Caco-2 (cell line): ENCODE measurements at regions of chr4 and their contacts with region 1.

Region 1: GRCh38 chr4:76896731-76897535 is 1.0 kb downstream of the SOWAHB start:
- DNase-seq: peak in 1 of 2 experiments; percentile 66
- H3K4me3 ChIP-seq: peak overlapping the region; percentile 92
- H3K4me3 Mint-ChIP-seq: peak overlapping the region; percentile 72
- H3K27ac Mint-ChIP-seq: no peak overlapping the region
- H3K4me1 ChIP-seq: peaks cover 23% of the 10 kb centered on the region
- H3K4me1 Mint-ChIP-seq: peaks cover 14% of the 10 kb centered on the region
- H3K27me3 ChIP-seq: no peaks in the 10 kb centered on the region
- H3K27me3 Mint-ChIP-seq: no peaks in the 10 kb centered on the region
- CTCF ChIP-seq: no peak

Region 2: DNA sequence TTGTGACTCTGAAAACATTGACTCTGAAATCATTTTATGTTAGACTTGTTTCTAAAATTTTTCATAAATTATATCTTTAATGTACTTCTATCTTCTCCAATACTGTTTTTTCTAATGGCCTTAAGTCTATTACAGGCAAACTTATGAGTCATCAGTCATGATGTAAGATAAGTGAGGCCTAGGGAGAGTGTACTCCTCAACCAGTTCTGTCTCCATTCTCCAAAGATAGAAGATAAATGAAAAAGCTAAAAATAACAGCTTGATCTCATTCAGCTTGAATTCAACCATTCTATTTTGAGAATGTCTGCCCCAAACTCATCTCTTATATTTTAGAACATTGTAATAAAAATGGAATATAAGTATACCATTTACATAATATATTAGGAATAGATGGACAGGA is 555.9 kb before region 1 on chr4:
- CTCF ChIA-PET with region 1: no interaction called
- POLR2A ChIA-PET with region 1: no interaction called
- intact Hi-C with region 1: no loop called
- DNase-seq: no peak
- H3K4me3 ChIP-seq: no peak overlapping the region
- H3K4me3 Mint-ChIP-seq: no peak overlapping the region
- H3K27ac Mint-ChIP-seq: no peak overlapping the region
- H3K4me1 ChIP-seq: 0 out of 2 replicates have a peak, but pooled peaks cover 10% of the 10 kb centered on the region
- H3K4me1 Mint-ChIP-seq: no peaks in the 10 kb centered on the region
- H3K27me3 ChIP-seq: no peaks in the 10 kb centered on the region
- H3K27me3 Mint-ChIP-seq: no peaks in the 10 kb centered on the region
- CTCF ChIP-seq: no peak

Region 3: DNA sequence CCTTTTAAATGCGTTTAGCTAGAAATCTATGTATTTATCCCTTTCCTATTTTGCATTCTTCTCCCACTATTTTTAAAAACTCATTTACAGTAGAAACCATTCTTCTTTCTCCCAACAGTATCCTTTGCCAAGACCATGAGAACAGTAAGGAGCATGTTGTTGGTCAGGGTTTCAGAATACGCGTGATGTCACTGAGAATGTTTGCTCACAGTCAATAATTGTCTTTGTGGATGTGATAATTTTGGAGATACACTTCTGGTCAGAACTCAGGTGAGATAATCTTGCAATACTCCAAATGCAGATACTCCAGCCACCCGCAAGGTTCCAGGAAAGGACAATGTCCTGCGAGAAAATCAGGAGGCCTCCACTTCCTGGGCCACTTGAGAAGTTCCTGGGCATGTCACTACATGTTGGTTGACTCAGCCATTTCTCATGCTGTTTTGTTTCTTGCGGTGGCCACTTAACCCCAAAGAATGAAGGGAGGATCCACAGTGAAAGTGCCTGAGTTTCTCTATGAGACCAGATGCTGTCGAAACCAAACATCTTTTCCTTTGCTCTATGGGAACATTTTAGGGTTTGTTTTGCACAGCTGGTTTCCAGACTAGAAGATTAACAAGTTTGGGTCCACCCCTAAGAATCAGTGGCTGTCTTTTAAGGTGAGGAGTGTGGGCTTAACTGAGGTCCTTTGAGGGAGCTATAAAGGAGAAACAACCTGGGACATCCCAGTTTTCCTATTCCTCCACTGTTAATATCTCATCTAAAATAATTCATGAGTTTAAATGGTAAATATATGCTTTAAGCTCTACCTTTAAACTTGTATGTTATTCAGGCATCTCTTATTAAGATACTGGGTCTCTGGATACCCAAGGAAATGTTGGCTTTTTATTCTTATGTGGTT is 115.0 kb before region 1 on chr4:
- CTCF ChIA-PET with region 1: no interaction called
- POLR2A ChIA-PET with region 1: no interaction called
- intact Hi-C with region 1: loop called (anchors 5 kb)
- DNase-seq: peak; percentile 56 to 83
- H3K4me3 ChIP-seq: no peak overlapping the region
- H3K4me3 Mint-ChIP-seq: peak overlapping the region; percentile 9
- H3K27ac Mint-ChIP-seq: peak overlapping the region; percentile 77
- H3K4me1 ChIP-seq: peaks cover 22% of the 10 kb centered on the region
- H3K4me1 Mint-ChIP-seq: peaks cover 13% of the 10 kb centered on the region
- H3K27me3 ChIP-seq: no peaks in the 10 kb centered on the region
- H3K27me3 Mint-ChIP-seq: no peaks in the 10 kb centered on the region
- CTCF ChIP-seq: no peak

Region 4: GRCh38 chr4:76850010-76850441 is 46.9 kb before region 1 on chr4:
- CTCF ChIA-PET with region 1: no interaction called
- POLR2A ChIA-PET with region 1: no interaction called
- intact Hi-C with region 1: loop called (anchors 1 kb)
- DNase-seq: peak in 1 of 2 experiments; percentile 58
- H3K4me3 ChIP-seq: no peak overlapping the region
- H3K4me3 Mint-ChIP-seq: peak overlapping the region; percentile 37
- H3K27ac Mint-ChIP-seq: no peak overlapping the region
- H3K4me1 ChIP-seq: peaks cover 18% of the 10 kb centered on the region
- H3K4me1 Mint-ChIP-seq: peaks cover 12% of the 10 kb centered on the region
- H3K27me3 ChIP-seq: no peaks in the 10 kb centered on the region
- H3K27me3 Mint-ChIP-seq: no peaks in the 10 kb centered on the region
- CTCF ChIP-seq: no peak

Region 5: DNA sequence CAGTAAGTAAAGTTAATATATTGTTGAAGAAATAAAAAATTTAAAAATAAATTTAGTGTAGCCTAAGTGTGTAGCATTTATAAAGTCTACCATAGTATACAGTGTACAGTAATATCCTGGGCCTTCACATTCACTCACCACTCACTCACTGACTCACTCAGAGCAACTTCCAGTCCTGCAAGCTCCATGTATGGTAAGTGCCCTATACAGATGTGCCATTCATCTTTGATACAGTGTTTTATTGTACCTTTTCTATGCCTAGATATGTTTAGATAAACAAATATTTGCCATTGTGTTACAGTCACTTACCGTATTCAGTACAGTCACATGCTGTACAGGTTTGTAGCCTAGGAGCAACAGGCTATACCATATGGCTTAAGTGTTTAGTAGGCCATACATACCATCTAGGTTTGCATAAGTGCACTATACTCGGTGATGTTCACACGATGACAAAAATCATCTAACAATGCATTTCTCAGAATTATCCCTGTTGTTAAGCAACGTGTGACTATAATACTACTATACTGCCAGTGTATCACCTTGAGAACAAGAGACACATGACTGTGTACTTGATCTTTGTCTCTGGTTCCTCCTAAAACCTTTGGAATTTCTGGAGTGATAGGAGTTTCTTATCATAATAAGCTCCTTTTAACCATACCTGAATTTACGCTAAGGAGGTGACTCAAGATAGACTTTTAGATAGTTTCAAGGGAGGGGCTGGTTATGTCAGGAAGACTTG is 26.9 kb after region 1 on chr4:
- CTCF ChIA-PET with region 1: interaction called, 3 read pairs
- POLR2A ChIA-PET with region 1: no interaction called
- intact Hi-C with region 1: loop called (anchors 2 kb)
- DNase-seq: no peak
- H3K4me3 ChIP-seq: no peak overlapping the region
- H3K4me3 Mint-ChIP-seq: no peak overlapping the region
- H3K27ac Mint-ChIP-seq: no peak overlapping the region
- H3K4me1 ChIP-seq: peaks cover 48% of the 10 kb centered on the region
- H3K4me1 Mint-ChIP-seq: peaks cover 21% of the 10 kb centered on the region
- H3K27me3 ChIP-seq: no peaks in the 10 kb centered on the region
- H3K27me3 Mint-ChIP-seq: no peaks in the 10 kb centered on the region
- CTCF ChIP-seq: no peak

Region 6: DNA sequence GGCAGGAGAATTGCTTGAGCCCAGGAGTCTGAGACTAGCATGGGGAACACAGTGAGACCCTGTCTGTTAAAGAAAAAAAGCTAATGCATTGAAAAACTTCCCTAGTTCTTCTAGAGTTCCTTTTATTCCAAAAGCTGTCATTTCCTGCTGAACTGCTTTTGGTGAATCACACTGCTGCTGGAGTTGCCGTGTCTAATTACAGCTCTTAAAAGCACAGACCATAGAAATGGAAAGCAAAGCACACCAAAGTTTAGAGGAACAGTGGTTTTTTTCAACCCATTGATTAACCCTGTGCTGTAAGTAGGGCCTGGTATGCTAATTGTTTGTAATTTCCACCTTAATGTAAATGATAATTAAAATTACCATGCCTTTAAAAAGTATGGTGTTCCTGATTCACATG is 105.0 kb after region 1 on chr4:
- CTCF ChIA-PET with region 1: no interaction called
- POLR2A ChIA-PET with region 1: no interaction called
- intact Hi-C with region 1: no loop called
- DNase-seq: no peak
- H3K4me3 ChIP-seq: no peak overlapping the region
- H3K4me3 Mint-ChIP-seq: no peak overlapping the region
- H3K27ac Mint-ChIP-seq: no peak overlapping the region
- H3K4me1 ChIP-seq: peaks cover under 1% of the 10 kb centered on the region; the same call in 1 of the 2 replicates
- H3K4me1 Mint-ChIP-seq: peaks cover 3% of the 10 kb centered on the region
- H3K27me3 ChIP-seq: no peaks in the 10 kb centered on the region
- H3K27me3 Mint-ChIP-seq: no peaks in the 10 kb centered on the region
- CTCF ChIP-seq: no peak

Region 7: DNA sequence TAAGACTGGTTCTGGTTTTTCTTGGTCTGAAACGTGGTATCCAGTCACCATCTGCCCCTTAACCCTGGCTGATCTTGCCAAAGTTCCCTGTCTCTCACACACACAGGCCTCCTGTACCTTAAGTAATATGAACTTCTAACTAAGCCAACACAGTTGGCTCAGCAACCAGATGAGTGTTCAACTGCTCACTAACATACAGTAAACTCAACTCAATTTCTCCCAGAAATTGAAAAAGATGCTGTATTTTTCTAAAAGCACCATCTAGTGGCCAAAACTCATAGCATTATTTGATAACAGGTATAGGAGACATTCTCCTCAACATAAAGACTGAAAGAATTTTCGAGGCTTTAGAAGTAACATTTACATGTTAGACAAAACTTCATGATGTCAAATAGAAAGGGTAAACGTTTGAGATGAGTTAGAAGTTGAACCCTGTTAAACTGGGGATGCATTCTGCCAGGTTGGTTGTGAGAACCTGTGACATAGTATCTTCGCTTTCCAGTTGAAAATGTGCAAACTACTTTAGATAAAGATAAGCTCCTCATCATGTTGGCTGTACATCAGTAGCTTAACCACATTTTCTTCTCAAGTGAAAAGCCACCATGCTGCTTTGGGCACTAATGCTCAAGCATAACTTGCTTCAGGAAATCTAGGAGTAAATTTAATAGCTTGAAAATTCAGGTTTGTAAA is 147.7 kb after region 1 on chr4:
- CTCF ChIA-PET with region 1: no interaction called
- POLR2A ChIA-PET with region 1: no interaction called
- intact Hi-C with region 1: loop called (anchors 2 kb)
- DNase-seq: peak in 1 of 2 experiments; percentile 29
- H3K4me3 ChIP-seq: no peak overlapping the region
- H3K4me3 Mint-ChIP-seq: peak overlapping the region; percentile 18
- H3K27ac Mint-ChIP-seq: peak overlapping the region; percentile 67
- H3K4me1 ChIP-seq: peaks cover 51% of the 10 kb centered on the region
- H3K4me1 Mint-ChIP-seq: peaks cover 18% of the 10 kb centered on the region
- H3K27me3 ChIP-seq: no peaks in the 10 kb centered on the region
- H3K27me3 Mint-ChIP-seq: no peaks in the 10 kb centered on the region
- CTCF ChIP-seq: peak in 1 of 2 experiments; percentile 54